Ovary (tissue), 10 donors: ENCODE measurements at regions of chr1 and their contacts with region 1.

Region 1: DNA sequence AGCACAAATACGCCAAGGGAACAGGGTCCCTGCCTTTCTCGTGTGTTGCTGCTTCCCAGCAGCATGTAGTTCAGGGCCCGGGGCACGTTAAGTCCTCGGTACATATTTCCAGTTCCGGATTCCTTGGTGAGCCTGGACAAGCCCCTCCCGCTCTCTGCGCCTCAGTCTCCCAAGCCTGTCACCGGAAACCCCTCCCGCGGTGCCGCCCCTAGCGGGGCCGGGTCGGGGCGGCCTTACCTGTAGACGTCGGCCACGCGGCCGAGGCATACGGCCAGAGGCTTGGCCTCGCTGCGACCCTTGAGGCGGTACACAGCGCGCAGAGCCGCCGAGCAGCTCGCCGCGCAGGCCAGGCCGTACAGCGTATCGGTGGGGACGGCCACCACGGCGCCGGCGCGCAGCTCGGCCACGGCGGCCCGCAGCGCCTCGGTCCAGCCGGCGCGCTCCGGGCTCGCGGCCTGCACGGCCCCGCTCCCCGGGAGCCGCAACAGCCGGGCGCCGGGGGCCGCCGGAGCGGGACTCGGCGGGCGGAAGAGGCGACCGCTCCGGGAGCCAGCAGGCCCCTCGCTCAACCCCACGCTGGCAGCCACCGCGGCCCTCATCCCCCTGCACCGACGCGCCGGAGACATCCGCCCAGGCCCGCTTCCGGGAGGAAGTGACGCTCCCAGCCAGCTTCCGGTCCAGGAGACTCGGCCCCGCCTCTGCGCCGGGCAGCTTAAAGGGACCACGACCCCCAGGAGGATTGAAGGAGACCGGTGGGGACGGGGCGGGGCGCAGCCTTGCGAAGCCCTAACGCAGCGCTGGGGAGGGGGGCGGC is at the starts of genes C1orf122 and YRDC:
- DNase-seq: peak; percentile 92 to 95 (median 93)
- H3K4me3 ChIP-seq: peak within 1 kb of the TSS; percentile 63
- H3K27ac ChIP-seq: peak within 1 kb of the TSS; percentile 89 to 90
- H3K4me1 ChIP-seq: peaks cover 10% of the 10 kb centered on the region
- H3K27me3 ChIP-seq: no peaks in the 10 kb centered on the region
- CTCF ChIP-seq: no peak
- EP300 ChIP-seq: no peak
- POLR2A ChIP-seq: peak; percentile 68
- total RNA-seq, gene C1orf122: 24.5 to 56.2 (median 32.5) TPM
- total RNA-seq, gene YRDC: 7.2 to 15.0 (median 11.0) TPM

Region 2: GRCh38 chr1:37549341-37549740 is 258.4 kb before region 1 on chr1:
- intact Hi-C with region 1: loop called in 1 of 4 experiments (anchors 5 kb)
- DNase-seq: no peak
- H3K4me3 ChIP-seq: no peak overlapping the region
- H3K27ac ChIP-seq: no peak overlapping the region
- H3K4me1 ChIP-seq: peaks cover 4% of the 10 kb centered on the region
- H3K27me3 ChIP-seq: no peaks in the 10 kb centered on the region
- CTCF ChIP-seq: no peak
- EP300 ChIP-seq: no peak
- POLR2A ChIP-seq: no peak

Region 3: GRCh38 chr1:37859507-37860345 is 52.0 kb after region 1 on chr1 and contains the start of gene MTF1:
- intact Hi-C with region 1: loop called in 2 of 4 experiments (anchors 5 to 10 kb)
- DNase-seq: peak; percentile 96 to 97 (median 97)
- H3K4me3 ChIP-seq: peak within 1 kb of the TSS; percentile 91
- H3K27ac ChIP-seq: peak within 1 kb of the TSS; percentile 71 to 84
- H3K4me1 ChIP-seq: peaks cover 4% of the 10 kb centered on the region
- H3K27me3 ChIP-seq: no peaks in the 10 kb centered on the region
- CTCF ChIP-seq: peak; percentile 81 to 90 (median 89)
- EP300 ChIP-seq: peak; percentile 1
- POLR2A ChIP-seq: peak; percentile 84
- total RNA-seq, gene MTF1: 3.4 to 29.1 (median 21.9) TPM